A673 (cell line): ENCODE measurements at regions of chr7 and their contacts with region 1.

Region 1: DNA sequence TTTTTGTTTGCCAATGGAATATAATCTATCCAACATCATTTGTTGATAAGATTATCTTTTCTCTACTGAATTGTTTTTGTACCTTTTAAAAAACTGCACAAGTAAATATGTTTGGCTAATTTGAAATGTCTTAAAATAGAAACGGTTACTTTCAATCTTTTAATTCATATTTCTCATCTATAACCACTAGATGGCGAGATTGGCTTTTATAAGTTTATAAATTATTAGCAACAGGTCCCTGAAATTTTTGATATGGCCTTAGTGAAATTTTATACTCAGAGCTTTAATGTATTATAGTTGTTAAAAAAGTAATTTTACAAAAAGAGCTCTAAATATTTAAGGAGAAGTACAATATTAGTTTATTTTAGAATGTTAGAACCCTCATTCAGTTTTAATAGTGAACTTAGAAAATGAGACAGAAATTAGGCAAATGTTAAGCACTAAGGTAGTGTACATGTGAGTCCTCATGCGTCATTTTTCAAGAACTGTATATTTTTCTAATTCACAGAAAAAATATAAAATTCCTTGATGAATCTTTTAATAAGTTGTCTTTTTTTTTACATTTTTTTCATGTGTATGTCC is 592.5 kb downstream of the ARL4A start:
- DNase-seq: peak; percentile 61
- H3K4me3 ChIP-seq: no peak overlapping the region
- H3K27ac ChIP-seq: no peak overlapping the region
- H3K4me1 ChIP-seq: no peaks in the 10 kb centered on the region
- H3K27me3 ChIP-seq: no peaks in the 10 kb centered on the region
- CTCF ChIP-seq: peak; percentile 58; the same call in 1 of the 2 replicates

Region 2: GRCh38 chr7:13414661-13415105 is 134.7 kb after region 1 on chr7:
- CTCF ChIA-PET with region 1: interaction called, 3 read pairs
- POLR2A ChIA-PET with region 1: no interaction called
- intact Hi-C with region 1: loop called (anchors 5 kb)
- DNase-seq: no peak
- H3K4me3 ChIP-seq: no peak overlapping the region
- H3K27ac ChIP-seq: no peak overlapping the region
- H3K4me1 ChIP-seq: no peaks in the 10 kb centered on the region
- H3K27me3 ChIP-seq: peaks cover 12% of the 10 kb centered on the region
- CTCF ChIP-seq: no peak

Region 3: DNA sequence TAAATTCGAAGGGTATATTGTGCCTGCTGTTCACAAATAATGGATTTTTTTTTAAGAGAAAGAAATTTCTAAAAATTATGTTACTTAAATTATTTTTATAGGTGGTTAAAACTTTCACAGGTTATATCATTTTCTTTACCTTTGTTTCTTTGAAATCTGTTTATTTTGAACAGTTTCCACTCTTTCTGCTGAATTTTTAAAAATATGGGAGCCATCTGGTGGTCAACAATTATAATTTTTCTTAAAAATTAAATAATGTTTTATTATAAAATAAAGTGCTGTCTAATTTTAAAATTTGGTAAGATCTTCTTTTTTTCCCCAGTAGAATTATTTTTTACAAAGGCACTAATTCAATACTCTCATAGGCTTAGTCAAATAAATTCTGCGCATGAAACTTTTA is 445.6 kb after region 1 on chr7:
- CTCF ChIA-PET with region 1: no interaction called
- POLR2A ChIA-PET with region 1: no interaction called
- intact Hi-C with region 1: loop called (anchors 5 kb)
- DNase-seq: no peak
- H3K4me3 ChIP-seq: no peak overlapping the region
- H3K27ac ChIP-seq: no peak overlapping the region
- H3K4me1 ChIP-seq: peaks cover 3% of the 10 kb centered on the region
- H3K27me3 ChIP-seq: no peaks in the 10 kb centered on the region
- CTCF ChIP-seq: no peak; the same call in 1 of the 2 replicates

Region 4: DNA sequence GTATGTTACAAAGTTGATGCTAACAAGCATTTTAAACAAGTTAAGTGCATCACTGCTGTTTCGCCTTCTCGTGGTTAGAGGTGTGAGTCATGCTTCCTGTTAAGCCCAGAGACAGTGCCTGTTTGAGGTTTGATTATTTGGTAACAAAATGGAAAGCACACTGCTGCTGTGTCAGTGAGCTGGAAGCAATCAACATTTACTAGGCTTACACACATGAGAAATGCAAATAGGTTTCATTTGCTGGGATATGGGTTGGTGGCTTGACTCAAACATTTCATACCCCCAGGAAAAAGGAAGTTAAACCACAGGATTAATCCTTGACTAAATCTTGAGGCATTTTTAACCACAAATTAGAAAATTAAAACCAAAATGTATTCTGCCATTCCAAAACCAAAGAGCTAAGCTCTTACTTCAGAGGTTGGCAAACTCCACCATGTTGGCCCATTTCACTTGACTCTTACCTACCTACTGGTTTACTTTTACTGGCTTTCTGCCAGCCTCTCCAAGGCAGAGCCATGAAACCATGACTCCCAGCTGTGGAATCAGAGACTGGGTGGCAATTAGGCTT is 570.3 kb after region 1 on chr7:
- CTCF ChIA-PET with region 1: no interaction called
- POLR2A ChIA-PET with region 1: no interaction called
- intact Hi-C with region 1: loop called (anchors 10 kb)
- DNase-seq: peak; percentile 98
- H3K4me3 ChIP-seq: peak overlapping the region; percentile 14
- H3K27ac ChIP-seq: peak overlapping the region; percentile 93
- H3K4me1 ChIP-seq: peaks cover 46% of the 10 kb centered on the region
- H3K27me3 ChIP-seq: no peaks in the 10 kb centered on the region
- CTCF ChIP-seq: no peak

Region 5: DNA sequence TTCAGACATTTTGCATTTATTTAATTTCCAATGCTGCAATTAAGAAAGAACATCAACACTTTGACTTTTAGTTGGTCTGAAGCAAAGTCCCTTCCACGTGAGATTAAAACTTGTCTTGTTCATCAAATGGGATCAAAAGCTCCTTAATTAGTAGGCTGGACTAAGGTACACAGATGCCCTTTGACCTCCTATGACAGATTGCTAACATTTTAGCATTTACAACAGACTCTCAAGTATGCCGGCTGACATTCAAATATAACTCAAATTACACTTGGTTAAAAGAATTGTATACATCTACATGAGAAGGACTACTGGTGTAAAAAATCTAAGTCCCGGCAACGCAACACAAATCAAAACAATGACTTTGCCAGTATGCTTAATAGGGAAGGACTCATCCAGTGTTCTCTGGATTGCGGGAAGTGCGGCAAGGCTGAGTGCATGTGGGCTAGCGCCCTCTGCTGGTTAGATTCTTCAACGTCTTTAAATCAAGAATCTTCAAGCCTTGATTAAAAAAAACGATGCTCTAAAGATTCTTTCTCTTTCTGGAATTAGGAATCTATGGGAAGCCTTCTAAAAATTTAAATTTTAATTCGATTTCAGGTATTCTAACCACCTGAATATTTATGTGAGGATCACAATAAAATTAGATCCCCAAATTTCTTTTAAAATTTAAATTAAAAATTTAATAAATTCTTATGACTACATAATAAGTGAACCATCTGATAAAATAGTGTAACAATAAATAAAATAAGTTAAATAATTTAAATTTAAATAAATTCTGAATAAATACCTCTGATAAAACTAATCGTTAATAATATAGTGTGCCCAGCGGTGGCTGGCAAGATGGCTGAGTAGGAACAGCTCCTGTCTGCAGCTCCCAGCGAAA is 1177.9 kb after region 1 on chr7:
- CTCF ChIA-PET with region 1: no interaction called
- POLR2A ChIA-PET with region 1: no interaction called
- intact Hi-C with region 1: loop called (anchors 5 kb)
- DNase-seq: peak; percentile 88
- H3K4me3 ChIP-seq: peak overlapping the region; percentile 15
- H3K27ac ChIP-seq: no peak overlapping the region
- H3K4me1 ChIP-seq: no peaks in the 10 kb centered on the region
- H3K27me3 ChIP-seq: no peaks in the 10 kb centered on the region
- CTCF ChIP-seq: peak; percentile 86

Region 6: DNA sequence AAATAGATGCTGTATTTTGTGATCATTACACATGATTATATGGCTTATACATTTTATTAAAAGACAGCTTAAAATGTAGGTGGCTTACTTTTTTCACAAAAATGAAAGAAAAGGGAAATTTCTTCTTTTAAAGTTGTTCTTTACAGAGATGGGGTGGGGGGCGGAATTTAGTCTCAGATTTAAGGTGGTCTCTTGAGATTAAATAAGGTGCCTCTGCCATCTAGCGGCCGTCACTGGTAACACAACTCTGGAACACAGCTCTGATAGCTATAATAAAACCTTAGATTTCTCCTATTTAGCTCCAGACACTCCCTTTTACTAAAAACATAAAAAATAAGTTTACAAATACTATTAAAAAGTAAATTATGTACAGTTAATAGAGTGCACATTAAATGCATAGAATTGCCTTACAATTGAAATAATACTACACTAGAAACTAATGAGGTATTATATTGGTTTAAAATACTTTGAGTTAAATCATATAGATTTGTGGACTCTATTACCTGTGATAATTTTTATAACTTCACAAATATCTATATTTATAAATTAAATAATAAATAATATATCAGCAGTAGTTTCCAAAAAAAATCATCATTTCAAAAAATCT is 1411.8 kb after region 1 on chr7:
- CTCF ChIA-PET with region 1: interaction called, 18 read pairs
- POLR2A ChIA-PET with region 1: no interaction called
- intact Hi-C with region 1: loop called (anchors 2 kb)
- DNase-seq: peak; percentile 61
- H3K4me3 ChIP-seq: no peak overlapping the region
- H3K27ac ChIP-seq: no peak overlapping the region
- H3K4me1 ChIP-seq: peaks cover 4% of the 10 kb centered on the region
- H3K27me3 ChIP-seq: no peaks in the 10 kb centered on the region
- CTCF ChIP-seq: peak; percentile 92

Region 7: GRCh38 chr7:15015545-15016326 is 1735.8 kb after region 1 on chr7:
- CTCF ChIA-PET with region 1: no interaction called
- POLR2A ChIA-PET with region 1: no interaction called
- intact Hi-C with region 1: loop called (anchors 5 kb)
- DNase-seq: peak; percentile 75
- H3K4me3 ChIP-seq: no peak overlapping the region
- H3K27ac ChIP-seq: no peak overlapping the region
- H3K4me1 ChIP-seq: no peaks in the 10 kb centered on the region
- H3K27me3 ChIP-seq: no peaks in the 10 kb centered on the region
- CTCF ChIP-seq: peak; percentile 74